Activated CD4-positive, alpha-beta T cell treated with anti-CD3 and anti-CD28 coated beads, Interleukin-2, amount 10 ng/mL, durations not matched to agents 24 days and 14 days (primary cell): ENCODE measurements at regions of chr2 and their contacts with region 1.

Region 1: DNA sequence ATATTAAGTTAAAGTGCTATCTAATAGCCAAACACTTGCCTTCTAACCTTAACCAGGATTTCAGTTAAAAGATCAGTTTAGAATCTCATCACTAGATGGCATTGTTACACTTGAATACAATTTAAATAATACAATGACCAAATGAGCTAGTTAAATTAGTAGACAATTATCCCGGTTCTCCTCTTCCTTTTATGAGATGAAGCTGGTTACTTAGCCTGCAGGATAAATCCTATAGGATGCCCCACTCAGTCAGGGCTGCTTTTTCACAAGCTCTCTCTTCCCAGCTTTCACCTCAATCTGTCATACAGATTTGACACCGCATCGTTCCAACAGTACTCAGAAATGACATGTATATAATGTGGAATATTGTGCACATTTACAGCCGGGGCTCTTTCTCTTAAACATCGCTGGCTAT is 678.8 kb downstream of the KCNJ3 start:
- DNase-seq: no peak
- H3K4me3 Mint-ChIP-seq: no peak overlapping the region
- H3K27ac Mint-ChIP-seq: peak overlapping the region; percentile 36
- H3K4me1 Mint-ChIP-seq: peaks cover 8% of the 10 kb centered on the region
- H3K27me3 Mint-ChIP-seq: no peaks in the 10 kb centered on the region

Region 2: DNA sequence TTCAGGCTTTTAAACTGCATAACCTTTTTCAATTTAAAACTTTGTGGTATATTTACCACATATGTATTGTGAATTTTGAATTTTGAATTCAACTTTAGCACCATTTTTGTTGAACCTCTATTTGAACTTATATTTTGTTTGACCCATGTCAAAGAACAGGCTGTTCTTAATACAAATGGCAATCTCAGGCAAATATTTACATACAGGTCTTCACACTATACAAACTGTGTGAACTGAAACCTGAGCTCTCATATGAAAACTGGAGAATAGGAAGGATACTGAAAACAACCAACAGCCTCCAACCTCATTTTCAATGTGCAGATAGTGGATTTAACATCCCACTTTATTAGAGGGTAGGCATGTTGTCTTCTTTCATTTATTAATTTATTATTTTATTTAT is 186.9 kb before region 1 on chr2:
- intact Hi-C with region 1: no loop called
- DNase-seq: no peak
- H3K4me3 Mint-ChIP-seq: no peak overlapping the region
- H3K27ac Mint-ChIP-seq: no peak overlapping the region
- H3K4me1 Mint-ChIP-seq: no peaks in the 10 kb centered on the region
- H3K27me3 Mint-ChIP-seq: no peaks in the 10 kb centered on the region

Region 3: GRCh38 chr2:155393406-155393805 is 16.1 kb after region 1 on chr2:
- intact Hi-C with region 1: no loop called
- DNase-seq: no peak
- H3K4me3 Mint-ChIP-seq: no peak overlapping the region
- H3K27ac Mint-ChIP-seq: no peak overlapping the region
- H3K4me1 Mint-ChIP-seq: no peaks in the 10 kb centered on the region
- H3K27me3 Mint-ChIP-seq: no peaks in the 10 kb centered on the region

Region 4: DNA sequence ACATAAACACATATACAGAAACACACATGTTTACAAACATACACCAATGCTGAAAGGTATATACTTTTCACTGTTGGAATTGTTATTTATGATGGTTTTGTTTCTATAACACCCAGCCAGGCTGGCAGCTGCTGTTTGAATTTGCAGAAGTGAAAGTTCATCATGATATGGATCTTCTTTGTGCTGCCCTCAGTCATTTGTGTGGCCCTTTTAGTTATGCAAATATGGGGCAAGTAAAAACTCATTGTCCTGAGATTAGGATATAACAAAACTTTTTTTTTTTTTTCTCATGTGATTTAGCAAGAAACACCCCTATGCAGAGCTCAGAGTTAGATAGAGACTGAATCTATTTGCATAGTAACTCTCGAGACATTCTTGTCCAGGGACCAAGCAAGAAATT is 35.3 kb after region 1 on chr2:
- intact Hi-C with region 1: no loop called
- DNase-seq: no peak
- H3K4me3 Mint-ChIP-seq: no peak overlapping the region
- H3K27ac Mint-ChIP-seq: no peak overlapping the region
- H3K4me1 Mint-ChIP-seq: no peaks in the 10 kb centered on the region
- H3K27me3 Mint-ChIP-seq: no peaks in the 10 kb centered on the region

Region 5: DNA sequence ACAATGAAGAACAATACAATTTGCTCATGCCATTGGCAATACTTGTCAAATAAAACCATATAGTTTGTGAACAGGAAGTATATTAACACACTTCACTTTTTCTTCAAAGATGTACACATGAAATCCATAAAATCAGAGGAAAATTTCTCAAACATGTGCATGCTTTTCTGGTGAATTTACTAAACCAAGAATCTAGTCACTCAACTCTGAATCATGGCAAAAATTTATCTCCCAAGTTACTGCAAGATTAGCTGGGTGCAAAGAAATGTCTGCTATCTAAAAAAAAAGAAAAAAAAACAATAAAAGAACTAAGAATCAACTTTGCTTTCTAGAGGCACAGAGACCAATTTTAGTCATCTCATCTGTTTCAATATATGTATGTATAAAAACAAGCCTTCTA is 536.1 kb after region 1 on chr2:
- intact Hi-C with region 1: loop called (anchors 10 kb)
- DNase-seq: no peak
- H3K4me3 Mint-ChIP-seq: no peak overlapping the region
- H3K27ac Mint-ChIP-seq: no peak overlapping the region
- H3K4me1 Mint-ChIP-seq: no peaks in the 10 kb centered on the region
- H3K27me3 Mint-ChIP-seq: peaks cover 2% of the 10 kb centered on the region

Region 6: DNA sequence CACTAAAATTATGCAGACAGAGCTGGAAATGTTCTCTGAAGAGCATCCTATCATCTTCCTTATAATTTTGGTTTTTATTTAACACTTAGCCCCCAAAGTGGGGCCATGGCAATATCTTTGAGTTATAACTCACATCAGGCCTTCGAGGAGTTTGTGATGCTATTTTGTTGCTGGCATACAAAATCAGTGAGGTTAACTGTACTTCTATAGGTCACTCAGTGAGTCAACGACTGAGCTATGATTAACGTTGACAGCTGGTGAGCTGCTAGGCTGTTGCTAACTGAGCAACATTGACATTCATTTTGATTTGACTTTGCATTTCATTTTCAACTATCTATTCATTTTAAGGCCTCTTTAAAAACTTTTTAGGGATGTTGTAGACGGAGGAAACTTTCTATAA is 1108.9 kb after region 1 on chr2:
- intact Hi-C with region 1: loop called (anchors 10 kb)
- DNase-seq: no peak
- H3K4me3 Mint-ChIP-seq: no peak overlapping the region
- H3K27ac Mint-ChIP-seq: no peak overlapping the region
- H3K4me1 Mint-ChIP-seq: peaks cover 33% of the 10 kb centered on the region
- H3K27me3 Mint-ChIP-seq: no peaks in the 10 kb centered on the region

Region 7: DNA sequence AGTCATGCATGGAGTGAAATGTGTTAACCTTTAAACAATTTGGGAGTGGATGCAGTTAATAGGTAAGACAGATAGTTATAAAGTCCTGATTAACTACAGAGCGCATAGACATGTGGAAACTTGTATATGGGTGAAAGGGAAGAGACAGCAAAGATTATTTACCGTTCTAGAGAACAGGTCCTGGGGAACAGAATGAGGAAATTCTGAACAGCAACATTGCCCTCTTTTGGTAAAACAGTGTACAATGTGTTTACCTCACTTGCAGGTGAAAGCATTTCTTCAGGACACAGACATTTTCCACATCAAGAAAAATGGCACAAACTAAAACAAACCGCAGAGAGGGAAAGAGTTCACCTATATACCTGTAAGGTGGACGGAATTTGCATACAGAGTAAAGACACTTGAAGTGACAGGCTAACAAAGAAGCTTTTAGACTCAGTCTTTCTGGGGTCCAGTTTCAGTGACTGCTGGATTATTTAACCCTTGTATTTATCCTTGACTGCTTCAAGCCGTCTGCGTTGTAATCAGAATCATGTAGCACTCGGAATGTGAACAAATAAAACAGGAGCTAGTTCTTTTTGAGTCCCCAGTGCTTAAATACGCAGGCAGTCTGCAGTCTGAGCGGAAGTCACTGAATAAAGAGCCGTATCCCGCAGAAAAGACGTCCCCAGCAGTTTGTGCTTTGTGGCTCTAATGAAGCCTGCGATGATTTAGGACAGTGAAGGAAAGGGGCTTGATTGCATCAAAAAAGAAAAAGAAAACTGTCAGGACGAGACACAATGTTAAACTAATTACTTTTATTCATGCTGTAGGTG is 1515.4 kb after region 1 on chr2:
- intact Hi-C with region 1: loop called (anchors 5 kb)
- DNase-seq: peak; percentile 66
- H3K4me3 Mint-ChIP-seq: peak overlapping the region; percentile 25
- H3K27ac Mint-ChIP-seq: no peak overlapping the region
- H3K4me1 Mint-ChIP-seq: peaks cover 33% of the 10 kb centered on the region
- H3K27me3 Mint-ChIP-seq: peaks cover 52% of the 10 kb centered on the region

Region 8: GRCh38 chr2:157194097-157194688 is 1816.9 kb after region 1 on chr2:
- intact Hi-C with region 1: loop called (anchors 5 kb)
- DNase-seq: peak; percentile 66
- H3K4me3 Mint-ChIP-seq: no peak overlapping the region
- H3K27ac Mint-ChIP-seq: no peak overlapping the region
- H3K4me1 Mint-ChIP-seq: peaks cover 9% of the 10 kb centered on the region
- H3K27me3 Mint-ChIP-seq: peaks cover 22% of the 10 kb centered on the region